A673 (cell line): ENCODE measurements at regions of chr6 and their contacts with region 1.

Region 1: GRCh38 chr6:121849477-121849876 is 414.0 kb downstream of the GJA1 start:
- DNase-seq: peak; percentile 84
- H3K4me3 ChIP-seq: no peak overlapping the region
- H3K27ac ChIP-seq: no peak overlapping the region
- H3K4me1 ChIP-seq: peaks cover 18% of the 10 kb centered on the region
- H3K27me3 ChIP-seq: no peaks in the 10 kb centered on the region
- CTCF ChIP-seq: peak; percentile 77

Region 2: GRCh38 chr6:121430514-121431460 is 418.7 kb before region 1 on chr6:
- CTCF ChIA-PET with region 1: no interaction called
- POLR2A ChIA-PET with region 1: no interaction called
- intact Hi-C with region 1: loop called (anchors 1 kb)
- DNase-seq: peak; percentile 69
- H3K4me3 ChIP-seq: no peak overlapping the region
- H3K27ac ChIP-seq: no peak overlapping the region
- H3K4me1 ChIP-seq: peaks cover 30% of the 10 kb centered on the region
- H3K27me3 ChIP-seq: no peaks in the 10 kb centered on the region
- CTCF ChIP-seq: peak; percentile 87

Region 3: GRCh38 chr6:121666814-121667213 is 182.7 kb before region 1 on chr6:
- CTCF ChIA-PET with region 1: no interaction called
- POLR2A ChIA-PET with region 1: no interaction called
- intact Hi-C with region 1: loop called (anchors 10 kb)
- DNase-seq: peak; percentile 90
- H3K4me3 ChIP-seq: no peak overlapping the region
- H3K27ac ChIP-seq: peak overlapping the region; percentile 8
- H3K4me1 ChIP-seq: peaks cover 8% of the 10 kb centered on the region
- H3K27me3 ChIP-seq: no peaks in the 10 kb centered on the region
- CTCF ChIP-seq: no peak

Region 4: DNA sequence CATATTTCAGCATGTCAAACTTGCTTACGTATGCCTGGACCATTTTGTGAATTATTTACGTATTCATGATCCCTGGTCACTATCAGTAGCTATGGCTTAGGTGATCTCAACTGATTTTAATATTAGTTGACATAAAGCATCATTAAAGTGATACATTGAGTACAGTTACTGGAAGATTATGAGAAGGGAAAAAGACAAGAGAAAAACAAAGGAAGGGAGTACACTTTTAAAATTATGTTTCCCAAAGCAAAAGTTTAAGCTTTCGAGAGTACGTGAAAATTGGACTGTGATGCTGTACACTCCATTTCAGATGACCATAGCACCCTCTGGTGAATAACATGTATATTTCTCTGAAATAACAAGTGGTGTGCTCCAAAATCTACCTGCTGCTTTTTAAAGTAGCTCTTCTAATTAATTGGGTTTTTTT is 334.9 kb after region 1 on chr6:
- CTCF ChIA-PET with region 1: interaction called, 4 read pairs
- POLR2A ChIA-PET with region 1: interaction called, 3 read pairs
- intact Hi-C with region 1: loop called (anchors 5 kb)
- DNase-seq: peak; percentile 27
- H3K4me3 ChIP-seq: peak overlapping the region; percentile 16
- H3K27ac ChIP-seq: no peak overlapping the region
- H3K4me1 ChIP-seq: no peaks in the 10 kb centered on the region
- H3K27me3 ChIP-seq: no peaks in the 10 kb centered on the region
- CTCF ChIP-seq: peak; percentile 66

Region 5: GRCh38 chr6:122372647-122373046 is 523.2 kb after region 1 on chr6:
- CTCF ChIA-PET with region 1: no interaction called
- POLR2A ChIA-PET with region 1: no interaction called
- intact Hi-C with region 1: loop called (anchors 5 kb)
- DNase-seq: peak; percentile 52
- H3K4me3 ChIP-seq: no peak overlapping the region
- H3K27ac ChIP-seq: no peak overlapping the region
- H3K4me1 ChIP-seq: no peaks in the 10 kb centered on the region
- H3K27me3 ChIP-seq: no peaks in the 10 kb centered on the region
- CTCF ChIP-seq: peak; percentile 62